Heart right ventricle (tissue), 16 donors: ENCODE measurements at regions of chr5 and their contacts with region 1.

Region 1: GRCh38 chr5:82635561-82636288 is 357.6 kb upstream of the RPS23 start:
- DNase-seq: no peak
- ATAC-seq: no peak
- H3K4me3 ChIP-seq: no peak overlapping the region
- H3K27ac ChIP-seq: no peak overlapping the region
- H3K4me1 ChIP-seq: peaks cover 0 to 15% (median 8%) of the 10 kb centered on the region in 9 donors
- H3K27me3 ChIP-seq: no peaks in the 10 kb centered on the region
- CTCF ChIP-seq: no peak

Region 2: DNA sequence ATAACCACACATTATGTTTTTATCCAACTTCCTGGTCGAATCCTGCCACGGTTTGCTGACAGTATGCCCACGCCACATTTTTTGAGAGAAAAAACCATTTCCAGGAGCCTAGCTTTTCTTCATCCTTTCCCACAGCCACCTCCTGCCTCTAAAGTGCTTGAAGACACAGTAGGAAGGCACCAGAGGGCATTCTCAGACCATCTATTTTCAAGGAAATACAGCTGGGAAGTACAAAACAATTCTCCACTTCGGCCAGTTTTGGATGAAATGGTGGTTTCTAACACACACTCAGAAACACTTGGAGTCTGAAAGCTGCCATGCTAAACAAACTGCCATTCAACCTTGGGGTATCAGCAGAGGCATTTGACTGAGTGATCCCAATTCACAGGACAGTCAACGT is 271.2 kb before region 1 on chr5:
- intact Hi-C with region 1: loop called in 2 of 10 experiments (anchors 10 kb)
- DNase-seq: peak in 1 of 2 donors; percentile 35
- ATAC-seq: peak in 7 of 8 donors; percentile 67 to 90 (median 87)
- H3K4me3 ChIP-seq: no peak overlapping the region
- H3K27ac ChIP-seq: peak overlapping the region in 2 of 10 donors; percentile 29 to 51
- H3K4me1 ChIP-seq: peaks cover 0 to 26% (median 4%) of the 10 kb centered on the region in 9 donors
- H3K27me3 ChIP-seq: no peaks in the 10 kb centered on the region
- CTCF ChIP-seq: peak in 8 of 9 donors; percentile 28 to 64 (median 48)

Region 3: GRCh38 chr5:82793808-82794419 is 158.2 kb after region 1 on chr5:
- intact Hi-C with region 1: loop called in 7 of 10 experiments (anchors 5 to 10 kb)
- DNase-seq: peak in 1 of 2 donors; percentile 6
- ATAC-seq: no peak
- H3K4me3 ChIP-seq: no peak overlapping the region
- H3K27ac ChIP-seq: no peak overlapping the region
- H3K4me1 ChIP-seq: no peaks in the 10 kb centered on the region
- H3K27me3 ChIP-seq: no peaks in the 10 kb centered on the region
- CTCF ChIP-seq: peak; percentile 33 to 74 (median 66)

Region 4: DNA sequence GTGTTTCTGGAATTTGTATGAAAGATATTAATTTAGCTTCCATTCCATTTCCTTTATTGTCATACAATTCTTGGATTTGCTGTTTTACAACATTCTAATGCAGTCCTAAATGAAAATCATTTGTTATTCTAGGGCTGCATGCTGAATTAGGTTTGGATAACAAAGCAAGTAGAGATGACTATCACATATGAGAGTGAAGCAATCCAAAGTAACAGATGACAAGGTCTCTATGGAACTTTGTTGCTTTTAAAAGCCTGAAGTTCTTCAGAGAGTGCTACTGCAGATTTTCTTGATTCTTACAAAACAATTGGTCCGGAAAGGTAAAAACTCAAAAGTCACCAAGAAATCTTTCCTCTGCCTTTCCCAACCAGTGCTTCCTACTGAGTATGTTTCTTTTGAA is 778.9 kb after region 1 on chr5:
- intact Hi-C with region 1: no loop called
- DNase-seq: no peak
- ATAC-seq: no peak
- H3K4me3 ChIP-seq: no peak overlapping the region
- H3K27ac ChIP-seq: no peak overlapping the region
- H3K4me1 ChIP-seq: no peaks in the 10 kb centered on the region
- H3K27me3 ChIP-seq: no peaks in the 10 kb centered on the region
- CTCF ChIP-seq: no peak